ENCODE measurements at regions of chr16 and their contacts with region 1.

Region 1: DNA sequence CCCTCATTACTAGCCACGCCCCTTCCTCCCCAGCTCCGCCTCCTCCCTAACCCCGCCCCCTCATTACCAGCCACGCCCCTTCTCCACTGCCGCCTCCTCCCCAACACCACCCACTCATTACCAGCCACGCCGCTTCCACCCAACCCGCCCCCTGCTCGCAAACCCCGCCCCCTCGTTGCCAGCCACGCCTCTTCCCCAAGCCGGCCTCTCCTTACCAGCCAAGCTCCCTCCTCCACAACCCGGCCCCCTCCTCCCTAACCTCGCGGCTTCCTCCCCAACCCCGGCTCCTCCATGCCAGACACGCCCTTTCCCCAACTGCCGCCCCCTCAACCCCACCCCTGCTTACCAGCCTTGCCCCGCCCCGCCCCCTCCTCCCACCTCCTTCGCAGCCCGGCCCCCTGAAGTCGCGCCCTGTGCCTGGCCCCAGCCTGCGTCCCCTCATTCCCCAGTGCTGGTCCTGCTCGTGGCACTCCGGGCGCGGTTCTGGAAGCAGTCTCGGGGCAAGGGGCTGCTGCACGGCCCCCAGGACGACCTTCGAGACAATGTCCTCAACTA is 7.2 kb downstream of the SLC22A31 start:
- DNase-seq: peak in 10 of 35 experiments; percentile 27 to 59 (median 52)
- ATAC-seq: peak; percentile 21 to 49 (median 28)
- H3K4me3 ChIP-seq: no peak overlapping the region
- H3K4me3 Mint-ChIP-seq: no peak overlapping the region
- H3K27ac ChIP-seq: no peak overlapping the region
- H3K27ac Mint-ChIP-seq: no peak overlapping the region
- H3K4me1 ChIP-seq: peaks cover 0 to 13% of the 10 kb centered on the region in 2 experiments
- H3K4me1 Mint-ChIP-seq: peaks cover 0 to 6% (median 0%) of the 10 kb centered on the region in 3 donors
- H3K27me3 ChIP-seq: peaks cover 0 to 16% of the 10 kb centered on the region in 2 experiments
- H3K27me3 Mint-ChIP-seq: peaks cover 0 to 7% of the 10 kb centered on the region in 2 donors

Region 2: DNA sequence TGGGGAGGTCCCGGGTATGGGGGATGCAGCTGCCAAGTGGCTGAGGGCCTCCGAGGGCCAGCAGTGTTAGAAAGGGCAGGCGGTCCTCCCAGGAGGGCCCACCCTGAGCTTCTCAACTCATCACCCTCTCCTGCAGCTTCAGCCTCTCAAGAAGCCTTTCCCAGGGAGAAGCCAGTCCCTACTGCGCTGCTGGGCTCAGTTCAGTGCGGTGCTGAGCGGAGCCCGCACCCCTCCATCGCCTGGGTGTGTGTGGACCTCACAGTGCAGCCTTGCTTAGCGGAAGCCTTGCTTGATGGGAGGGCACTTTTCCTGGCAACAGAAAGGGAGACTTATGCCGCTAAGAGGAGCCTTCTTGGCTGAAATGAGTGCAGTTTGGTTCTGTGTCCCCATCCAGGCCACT is 377.9 kb before region 1 on chr16:
- CTCF ChIA-PET with region 1: no interaction called
- POLR2A ChIA-PET with region 1: interaction called in 1 of 2 experiments, 17 read pairs
- DNase-seq: no peak
- ATAC-seq: no peak
- H3K4me3 ChIP-seq: no peak overlapping the region
- H3K4me3 Mint-ChIP-seq: no peak overlapping the region
- H3K27ac ChIP-seq: no peak overlapping the region
- H3K27ac Mint-ChIP-seq: no peak overlapping the region
- H3K4me1 ChIP-seq: peaks cover 3 to 29% of the 10 kb centered on the region in 2 experiments
- H3K4me1 Mint-ChIP-seq: peaks cover 6 to 16% (median 9%) of the 10 kb centered on the region in 3 donors
- H3K27me3 ChIP-seq: no peaks in the 10 kb centered on the region
- H3K27me3 Mint-ChIP-seq: no peaks in the 10 kb centered on the region

Measured in T-cell (primary cell).